Dendritic cell treated with granulocyte-macrophage colony-stimulating factor and Interleukin-4, amounts not matched to agents 40 ng/mL and 50 ng/mL, for 4 days (primary cell): ENCODE measurements at regions of chr11 and their contacts with region 1.

Region 1: GRCh38 chr11:134253188-134253993 is at the starts of genes ACAD8 and THYN1:
- H3K4me3 Mint-ChIP-seq: peak within 1 kb of the TSS; percentile 96
- H3K27ac Mint-ChIP-seq: peak within 1 kb of the TSS; percentile 84
- H3K4me1 Mint-ChIP-seq: peaks cover 27% of the 10 kb centered on the region
- H3K27me3 Mint-ChIP-seq: peaks cover 2% of the 10 kb centered on the region

Region 2: GRCh38 chr11:133570376-133570775 is 683.0 kb before region 1 on chr11:
- intact Hi-C with region 1: no loop called
- H3K4me3 Mint-ChIP-seq: no peak overlapping the region
- H3K27ac Mint-ChIP-seq: no peak overlapping the region
- H3K4me1 Mint-ChIP-seq: no peaks in the 10 kb centered on the region
- H3K27me3 Mint-ChIP-seq: no peaks in the 10 kb centered on the region

Region 3: GRCh38 chr11:134207538-134208239 is 45.7 kb before region 1 on chr11:
- intact Hi-C with region 1: loop called (anchors 10 kb)
- H3K4me3 Mint-ChIP-seq: no peak overlapping the region
- H3K27ac Mint-ChIP-seq: no peak overlapping the region
- H3K4me1 Mint-ChIP-seq: peaks cover 7% of the 10 kb centered on the region
- H3K27me3 Mint-ChIP-seq: no peaks in the 10 kb centered on the region

Region 4: GRCh38 chr11:134223836-134224709 is 29.3 kb before region 1 on chr11 and contains the starts of genes NCAPD3 and VPS26B:
- intact Hi-C with region 1: loop called (anchors 1 kb)
- H3K4me3 Mint-ChIP-seq: peak within 1 kb of the TSS; percentile 94
- H3K27ac Mint-ChIP-seq: peak within 1 kb of the TSS; percentile 94
- H3K4me1 Mint-ChIP-seq: peaks cover 58% of the 10 kb centered on the region
- H3K27me3 Mint-ChIP-seq: no peaks in the 10 kb centered on the region

Region 5: GRCh38 chr11:134275534-134276395 is 22.4 kb after region 1 on chr11 and contains the start of gene GLB1L3:
- intact Hi-C with region 1: no loop called
- H3K4me3 Mint-ChIP-seq: peak within 1 kb of the TSS; percentile 55
- H3K27ac Mint-ChIP-seq: no peak within 1 kb of the TSS
- H3K4me1 Mint-ChIP-seq: peaks cover 8% of the 10 kb centered on the region
- H3K27me3 Mint-ChIP-seq: peaks cover 86% of the 10 kb centered on the region